Brain microvascular endothelial cell (primary cell): ENCODE measurements at regions of chr13 and their contacts with region 1.

Region 1: DNA sequence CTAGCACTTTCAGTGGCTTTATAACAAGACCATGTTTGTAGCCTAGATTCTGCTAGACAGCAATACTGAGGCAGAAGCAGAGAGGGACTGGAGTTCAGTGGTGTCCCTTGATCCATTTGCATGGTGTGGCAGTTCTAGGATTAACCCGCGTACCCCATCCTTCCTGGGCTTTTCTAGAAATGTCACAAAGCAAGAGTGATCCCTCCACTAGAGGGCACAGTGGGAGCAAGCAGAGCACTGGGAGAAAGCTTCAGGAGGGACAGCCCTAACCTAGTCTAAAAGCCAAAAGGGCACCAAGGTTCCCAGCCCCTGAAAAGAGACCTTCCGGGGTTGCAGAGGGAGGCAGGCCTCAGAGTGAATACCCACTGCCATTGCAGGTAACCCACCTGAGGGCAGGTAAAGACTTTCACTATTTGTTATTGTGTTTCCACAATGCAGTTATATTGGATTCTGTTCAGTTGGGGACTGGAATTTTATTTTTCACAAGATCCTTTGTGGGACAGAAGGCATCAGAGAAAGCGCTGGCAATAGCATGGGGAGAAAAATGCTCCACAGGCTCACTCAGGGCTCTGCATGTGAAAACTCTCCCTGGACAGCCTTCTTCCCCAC is 170.6 kb downstream of the FLT1 start:
- DNase-seq: peak; percentile 81
- H3K4me3 ChIP-seq: no peak overlapping the region
- H3K27ac ChIP-seq: peak overlapping the region; percentile 42
- H3K27me3 ChIP-seq: no peaks in the 10 kb centered on the region
- CTCF ChIP-seq: peak; percentile 96

Region 2: GRCh38 chr13:27839809-27840467 is 484.3 kb before region 1 on chr13:
- in situ Hi-C with region 1: no loop called
- DNase-seq: no peak
- H3K4me3 ChIP-seq: no peak overlapping the region
- H3K27ac ChIP-seq: no peak overlapping the region
- H3K27me3 ChIP-seq: no peaks in the 10 kb centered on the region
- CTCF ChIP-seq: no peak

Region 3: GRCh38 chr13:28527411-28528028 is 203.2 kb after region 1 on chr13:
- in situ Hi-C with region 1: no loop called
- DNase-seq: no peak
- H3K4me3 ChIP-seq: no peak overlapping the region
- H3K27ac ChIP-seq: no peak overlapping the region
- H3K27me3 ChIP-seq: no peaks in the 10 kb centered on the region
- CTCF ChIP-seq: no peak

Region 4: DNA sequence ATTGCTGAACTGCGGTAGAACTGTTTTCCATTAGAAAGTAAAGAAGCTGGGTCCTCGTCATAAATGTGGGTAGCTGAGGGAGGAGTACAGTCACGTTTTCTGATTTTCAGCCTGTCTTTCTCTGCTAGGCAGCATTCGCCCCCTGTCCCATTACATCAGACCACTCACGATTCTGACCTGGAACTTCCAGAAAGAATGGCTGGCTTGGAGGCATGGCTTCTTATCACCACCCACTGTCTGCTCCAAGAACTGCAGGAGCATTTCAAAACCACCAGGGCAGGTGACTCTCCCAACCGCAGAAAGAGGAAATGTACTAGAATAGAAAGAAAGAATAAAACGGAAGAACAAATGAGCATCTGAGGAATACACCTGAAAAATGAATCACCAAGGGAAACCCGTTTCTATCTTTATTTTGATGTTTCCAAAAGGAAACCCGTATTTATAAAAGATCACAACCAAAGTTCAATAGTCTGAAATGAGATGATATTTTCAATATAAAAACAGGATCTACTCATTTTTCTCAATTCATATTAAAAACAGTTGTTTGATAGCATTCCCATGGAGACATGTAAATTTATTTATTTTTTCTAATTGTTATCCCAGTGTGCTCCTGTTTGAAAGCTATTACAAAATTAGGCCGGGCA is 312.5 kb after region 1 on chr13:
- in situ Hi-C with region 1: loop called (anchors 25 kb)
- DNase-seq: peak; percentile 83
- H3K4me3 ChIP-seq: no peak overlapping the region
- H3K27ac ChIP-seq: peak overlapping the region; percentile 66
- H3K27me3 ChIP-seq: no peaks in the 10 kb centered on the region
- CTCF ChIP-seq: peak; percentile 98